ENCODE measurements at regions of chr1 and their contacts with region 1.

Region 1: DNA sequence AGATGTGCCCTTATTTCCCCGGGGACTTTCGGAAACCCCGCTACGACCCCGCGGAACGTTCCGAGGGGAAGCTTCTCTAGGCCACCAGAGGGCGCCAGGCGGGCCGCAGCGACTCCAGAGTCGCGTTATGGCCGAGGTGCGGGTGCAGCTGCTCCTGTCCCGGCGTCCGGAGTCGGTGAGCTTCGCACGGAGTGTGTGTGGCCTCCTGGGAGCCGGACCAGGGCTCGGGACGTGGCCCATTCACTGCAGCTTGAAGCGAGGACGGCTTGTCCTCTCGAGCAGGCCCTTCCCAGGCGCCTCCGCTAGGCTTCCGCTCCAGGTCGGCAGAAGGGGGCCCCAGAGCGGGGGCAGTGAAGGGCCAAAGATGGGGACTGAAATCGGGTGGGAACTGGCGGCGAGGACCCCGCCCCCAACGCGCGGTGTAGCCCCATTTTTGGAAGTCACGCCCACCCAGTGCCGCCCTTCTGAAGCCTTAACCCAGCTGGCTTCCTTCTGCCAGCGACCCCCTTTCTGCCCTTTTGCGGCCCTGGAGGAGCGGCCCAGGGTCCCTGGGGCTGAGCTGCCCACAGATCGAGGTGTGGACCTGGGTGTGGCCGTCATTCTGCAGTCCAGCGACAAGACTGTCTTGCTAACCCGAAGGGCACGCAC is at the start of gene NUDT17:
- DNase-seq: peak; percentile 67
- ATAC-seq: peak; percentile 77
- H3K4me3 ChIP-seq: peak within 1 kb of the TSS; percentile 65
- H3K27ac ChIP-seq: peak within 1 kb of the TSS; percentile 81
- H3K4me1 ChIP-seq: peaks cover 16% of the 10 kb centered on the region
- H3K27me3 ChIP-seq: no peaks in the 10 kb centered on the region
- CTCF ChIP-seq: peak; percentile 88
- POLR2A ChIP-seq: peak; percentile 55; the same call in 1 of the 2 replicates
- RAD21 ChIP-seq: peak; percentile 63
- total RNA-seq, gene NUDT17: 2.3 and 2.8 TPM in 2 replicates

Region 2: DNA sequence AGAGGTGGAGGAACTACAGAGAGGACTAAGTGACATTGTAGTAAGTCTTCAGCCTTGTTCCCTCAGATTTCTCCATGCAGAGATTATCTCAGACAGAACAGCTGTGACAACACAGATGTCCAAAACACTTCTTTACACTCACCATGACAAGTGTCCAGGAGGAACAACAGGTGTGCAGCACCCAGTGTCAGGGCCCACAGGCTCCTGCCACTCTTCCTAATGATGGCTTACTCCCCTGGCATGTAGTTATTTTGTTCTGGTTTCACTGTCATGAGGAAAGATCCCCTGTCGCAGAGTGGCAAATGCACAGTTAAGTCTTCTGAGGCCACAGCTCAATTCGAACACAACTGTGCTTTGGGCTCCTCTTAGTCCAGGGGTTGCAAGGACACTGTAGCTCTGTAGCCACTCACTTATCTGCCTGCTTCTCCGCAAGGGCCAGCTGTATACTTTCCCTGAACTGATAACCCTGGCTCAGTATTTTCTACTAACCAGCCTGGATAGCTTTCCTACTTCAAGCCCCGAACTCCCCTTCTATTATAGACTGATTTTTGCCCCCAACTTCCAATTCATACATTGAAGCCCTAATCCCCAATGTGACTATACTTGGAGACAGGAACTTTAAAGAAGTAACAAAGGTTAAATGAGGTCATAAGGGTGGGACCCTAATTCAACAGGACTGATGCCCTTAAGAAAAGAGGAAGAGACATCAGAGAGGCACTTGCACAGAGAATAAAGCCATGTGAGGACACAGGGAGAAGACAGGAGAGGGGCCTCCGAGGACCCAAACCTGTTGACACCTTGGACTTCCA is 149.6 kb before region 1 on chr1:
- CTCF ChIA-PET with region 1: no interaction called
- POLR2A ChIA-PET with region 1: interaction called, 12 read pairs
- dilution Hi-C with region 1: no loop called
- in situ Hi-C with region 1: no loop called
- intact Hi-C with region 1: no loop called
- DNase-seq: no peak
- ATAC-seq: no peak
- H3K4me3 ChIP-seq: no peak overlapping the region
- H3K27ac ChIP-seq: no peak overlapping the region
- H3K4me1 ChIP-seq: peaks cover 6% of the 10 kb centered on the region; the same call in 1 of the 2 replicates
- H3K27me3 ChIP-seq: no peaks in the 10 kb centered on the region
- CTCF ChIP-seq: no peak
- POLR2A ChIP-seq: no peak
- RAD21 ChIP-seq: no peak

Region 3: GRCh38 chr1:145824499-145824842 is 21.2 kb before region 1 on chr1:
- CTCF ChIA-PET with region 1: no interaction called
- POLR2A ChIA-PET with region 1: no interaction called
- dilution Hi-C with region 1: no loop called
- in situ Hi-C with region 1: no loop called
- intact Hi-C with region 1: no loop called
- DNase-seq: no peak
- ATAC-seq: no peak
- H3K4me3 ChIP-seq: peak overlapping the region; percentile 53
- H3K27ac ChIP-seq: peak overlapping the region; percentile 91
- H3K4me1 ChIP-seq: 0 out of 2 replicates have a peak, but pooled peaks cover 2% of the 10 kb centered on the region
- H3K27me3 ChIP-seq: no peaks in the 10 kb centered on the region
- CTCF ChIP-seq: no peak
- POLR2A ChIP-seq: no peak
- RAD21 ChIP-seq: no peak

Region 4: GRCh38 chr1:145858894-145859490 is 13.4 kb after region 1 on chr1 and contains the start of gene PIAS3:
- CTCF ChIA-PET with region 1: interaction called, 13 read pairs
- POLR2A ChIA-PET with region 1: interaction called, 5 read pairs
- dilution Hi-C with region 1: no loop called
- in situ Hi-C with region 1: no loop called
- intact Hi-C with region 1: no loop called
- DNase-seq: peak; percentile 93
- ATAC-seq: peak; percentile 94
- H3K4me3 ChIP-seq: peak within 1 kb of the TSS; percentile 84
- H3K27ac ChIP-seq: peak within 1 kb of the TSS; percentile 96
- H3K4me1 ChIP-seq: peaks cover 3% of the 10 kb centered on the region
- H3K27me3 ChIP-seq: no peaks in the 10 kb centered on the region
- CTCF ChIP-seq: no peak
- POLR2A ChIP-seq: no peak
- RAD21 ChIP-seq: no peak
- total RNA-seq, gene PIAS3: 10.8 and 11.1 TPM in 2 replicates

Region 5: DNA sequence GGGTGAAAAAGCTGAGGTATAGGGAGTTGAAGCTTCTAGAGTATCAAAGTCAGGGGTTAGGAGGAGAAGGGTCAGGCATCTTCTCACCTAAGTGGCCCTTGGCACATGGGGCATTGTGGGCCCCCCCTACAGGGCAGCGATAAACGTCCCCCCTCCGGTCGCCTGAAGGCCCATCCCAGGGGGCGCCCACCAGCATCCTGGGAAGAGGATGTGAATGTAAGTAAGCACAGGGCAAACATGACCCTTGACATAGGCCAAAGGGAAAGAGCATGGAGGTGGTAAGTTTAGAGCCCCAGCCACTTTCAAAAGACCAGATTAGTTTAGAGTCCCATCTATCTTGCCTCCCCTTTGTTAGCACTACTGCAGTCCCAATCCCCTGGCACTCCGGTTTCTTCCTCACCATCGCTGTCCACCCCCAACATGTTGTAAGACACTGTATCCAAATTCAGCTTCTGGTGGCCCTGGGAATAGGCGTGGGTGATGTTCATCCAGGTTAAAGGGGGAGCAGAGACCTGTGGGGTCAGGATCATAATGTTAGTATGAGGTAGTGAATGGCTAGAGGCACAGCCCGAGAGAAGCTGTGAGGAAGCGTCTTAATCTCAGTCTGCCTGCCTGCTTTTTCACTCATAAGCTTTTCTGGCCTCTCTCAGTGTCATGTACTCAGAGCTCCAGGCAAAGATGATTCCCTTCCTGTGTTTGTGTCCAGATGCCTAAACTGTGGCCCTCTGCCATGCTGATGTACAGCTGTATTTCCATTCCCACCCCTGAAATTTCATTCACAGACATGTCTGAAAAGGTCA is 61.5 kb after region 1 on chr1:
- CTCF ChIA-PET with region 1: interaction called, 13 read pairs
- POLR2A ChIA-PET with region 1: interaction called, 7 read pairs
- dilution Hi-C with region 1: no loop called
- in situ Hi-C with region 1: no loop called
- intact Hi-C with region 1: loop called (anchors 2 kb)
- DNase-seq: peak; percentile 30
- ATAC-seq: no peak
- H3K4me3 ChIP-seq: no peak overlapping the region
- H3K27ac ChIP-seq: no peak overlapping the region
- H3K4me1 ChIP-seq: peaks cover 7% of the 10 kb centered on the region
- H3K27me3 ChIP-seq: no peaks in the 10 kb centered on the region
- CTCF ChIP-seq: no peak
- POLR2A ChIP-seq: no peak
- RAD21 ChIP-seq: no peak

Region 6: DNA sequence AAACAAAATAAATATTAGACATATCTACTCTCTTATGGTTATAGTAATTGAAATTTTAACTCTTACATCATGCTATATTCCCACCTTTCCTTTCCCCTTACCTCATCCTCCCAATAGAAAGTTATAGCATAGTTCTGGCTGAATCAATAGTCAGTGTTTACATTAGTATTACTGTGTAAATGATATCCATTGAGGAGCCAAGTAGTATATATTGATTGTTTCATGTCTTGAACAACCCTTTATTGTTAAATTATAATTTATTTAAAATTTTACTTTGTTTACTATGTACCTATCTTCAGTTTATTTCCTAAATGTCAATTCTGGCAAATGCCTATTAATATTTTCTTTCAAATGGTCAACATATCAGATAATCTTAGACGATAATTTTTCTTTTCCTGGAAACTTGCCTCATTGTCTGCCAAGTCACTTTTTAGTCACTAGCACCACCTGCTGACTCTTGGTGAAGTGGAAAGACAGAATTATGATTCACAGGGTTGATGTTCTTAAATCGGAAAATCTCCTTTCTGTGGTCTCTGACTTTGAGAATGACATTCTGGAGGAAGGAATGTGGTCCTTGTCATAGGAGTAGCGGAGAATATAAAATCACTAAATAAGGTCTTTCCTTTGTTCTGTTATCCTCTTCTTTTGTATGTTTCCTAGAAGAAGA is 167.2 kb after region 1 on chr1:
- CTCF ChIA-PET with region 1: interaction called, 7 read pairs
- POLR2A ChIA-PET with region 1: no interaction called
- dilution Hi-C with region 1: no loop called
- in situ Hi-C with region 1: loop called (anchors 5 kb)
- intact Hi-C with region 1: loop called (anchors 1 kb)
- DNase-seq: peak; percentile 86
- ATAC-seq: peak; percentile 72
- H3K4me3 ChIP-seq: no peak overlapping the region
- H3K27ac ChIP-seq: no peak overlapping the region
- H3K4me1 ChIP-seq: no peaks in the 10 kb centered on the region
- H3K27me3 ChIP-seq: peaks cover 9% of the 10 kb centered on the region
- CTCF ChIP-seq: peak; percentile 92
- POLR2A ChIP-seq: no peak; the same call in 1 of the 2 replicates
- RAD21 ChIP-seq: peak; percentile 91

Region 7: DNA sequence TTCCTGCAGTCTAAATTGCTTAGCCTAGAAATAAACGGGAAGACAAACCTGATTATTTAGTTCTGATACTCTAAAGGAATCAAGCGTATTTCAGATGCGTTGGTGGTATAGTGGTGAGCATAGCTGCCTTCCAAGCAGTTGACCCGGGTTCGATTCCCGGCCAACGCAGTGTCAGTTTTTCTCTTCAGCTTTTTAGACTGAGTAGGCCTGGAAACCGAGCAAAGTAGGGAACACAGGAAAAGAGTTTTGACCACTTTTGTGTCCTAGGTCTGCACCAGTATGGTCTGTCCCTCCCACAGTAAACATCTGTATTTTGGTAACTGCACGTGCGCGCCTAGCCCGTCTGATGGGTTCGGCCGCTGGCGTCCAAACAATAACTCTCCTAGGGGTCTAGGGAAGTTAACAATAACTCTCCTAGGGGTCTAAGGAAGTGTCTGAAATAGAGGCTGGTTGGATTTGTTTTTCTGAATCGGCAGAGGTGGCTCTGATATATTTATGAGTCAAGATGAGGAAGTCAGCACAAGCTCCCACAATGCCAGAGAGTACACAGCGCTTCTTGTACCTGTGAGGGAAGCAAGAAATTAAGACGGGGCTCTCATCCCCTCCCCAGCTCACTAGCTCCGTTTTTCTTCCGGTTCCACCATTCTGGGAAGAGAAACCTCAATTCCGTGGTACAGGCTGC is 191.5 kb after region 1 on chr1:
- CTCF ChIA-PET with region 1: interaction called, 10 read pairs
- POLR2A ChIA-PET with region 1: no interaction called
- dilution Hi-C with region 1: no loop called
- in situ Hi-C with region 1: no loop called
- intact Hi-C with region 1: no loop called
- DNase-seq: peak; percentile 87
- ATAC-seq: peak; percentile 49
- H3K4me3 ChIP-seq: peak overlapping the region; percentile 69
- H3K27ac ChIP-seq: peak overlapping the region; percentile 29
- H3K4me1 ChIP-seq: no peaks in the 10 kb centered on the region
- H3K27me3 ChIP-seq: no peaks in the 10 kb centered on the region
- CTCF ChIP-seq: no peak
- POLR2A ChIP-seq: no peak
- RAD21 ChIP-seq: no peak